Activated CD4-positive, alpha-beta T cell treated with anti-CD3 and anti-CD28 coated beads for 36 hours (primary cell): ENCODE measurements at regions of chr1 and their contacts with region 1.

Region 1: DNA sequence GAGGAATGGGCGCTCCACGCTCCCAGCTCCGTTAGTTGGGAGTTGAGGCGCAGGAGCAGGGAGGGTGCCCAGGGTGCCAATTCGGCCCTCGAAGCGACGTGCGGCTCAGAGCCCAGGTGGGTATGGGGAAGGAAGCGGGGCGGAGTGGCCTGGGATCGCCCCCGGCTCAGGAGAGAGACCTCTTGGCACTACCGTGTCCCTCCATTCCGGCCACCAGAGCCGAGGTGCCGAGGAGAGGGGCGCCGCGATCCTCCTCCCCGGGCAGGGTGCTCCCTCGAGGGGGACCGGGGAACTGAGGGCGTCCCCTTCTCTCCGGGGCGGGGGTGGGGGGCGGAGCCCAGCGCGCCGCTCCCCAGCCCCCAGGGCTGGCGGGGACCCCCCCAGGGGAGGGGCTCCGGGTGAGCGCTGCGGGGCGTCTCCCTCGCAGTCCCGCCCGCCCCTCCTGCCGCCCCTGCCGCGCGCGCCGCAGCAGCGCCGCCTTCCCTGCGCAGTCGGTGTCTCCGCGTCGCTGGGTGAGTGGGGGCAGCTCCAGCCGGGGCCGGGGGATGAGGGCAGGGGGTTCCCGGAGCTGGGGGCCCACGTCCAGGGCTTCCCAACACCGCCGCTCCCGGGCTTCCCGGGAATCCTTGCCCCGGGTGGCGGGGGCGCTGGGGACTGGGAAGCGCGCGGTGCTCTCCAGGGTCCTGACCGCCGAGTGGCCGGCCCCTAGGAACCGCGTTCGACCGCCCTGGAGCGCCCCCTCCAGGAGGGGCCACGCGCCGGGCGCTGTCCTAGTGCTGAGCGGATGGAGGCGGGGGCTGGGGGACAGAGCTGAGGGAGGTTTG is at the start of gene HPCA:
- DNase-seq: peak; percentile 76
- ATAC-seq: peak; percentile 83
- H3K4me3 Mint-ChIP-seq: no peak within 1 kb of the TSS
- H3K27ac Mint-ChIP-seq: no peak within 1 kb of the TSS
- H3K4me1 Mint-ChIP-seq: no peaks in the 10 kb centered on the region
- H3K27me3 Mint-ChIP-seq: peaks cover 48% of the 10 kb centered on the region
- total RNA-seq, gene HPCA: 0.49 TPM in 1 of 2 experiments, not detected in the other

Region 2: DNA sequence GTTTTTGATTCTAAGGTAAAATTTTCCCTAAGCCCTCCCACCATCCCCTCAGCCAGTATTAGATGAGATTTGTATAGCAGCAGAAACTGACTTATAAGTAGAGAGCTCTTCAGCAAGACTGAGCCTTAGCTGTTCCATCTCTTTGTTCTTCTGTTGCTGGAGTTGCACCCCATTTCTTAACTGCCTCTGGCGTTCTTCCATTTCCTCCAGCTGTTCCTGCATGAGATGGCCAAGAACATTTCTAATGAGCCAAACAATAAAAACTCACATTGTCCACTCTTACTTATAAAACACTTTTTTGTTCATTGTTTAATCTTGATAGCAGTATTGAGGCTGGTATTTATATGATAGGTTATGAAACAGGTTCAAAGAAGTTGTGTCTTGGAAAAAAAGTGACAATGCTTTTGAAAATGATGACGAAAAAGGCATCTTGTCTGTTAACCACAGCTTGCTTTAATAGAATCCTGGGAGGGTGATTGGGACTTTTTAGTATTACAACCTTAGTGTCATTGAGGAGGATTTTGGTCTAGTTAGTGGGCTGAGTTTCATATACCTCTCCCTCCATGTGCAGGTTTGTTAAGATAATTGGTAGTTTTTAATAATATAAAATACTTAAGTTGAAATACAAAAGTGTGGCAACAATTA is 201.9 kb before region 1 on chr1:
- CTCF ChIA-PET with region 1: no interaction called
- POLR2A ChIA-PET with region 1: no interaction called
- intact Hi-C with region 1: no loop called
- DNase-seq: no peak
- ATAC-seq: peak; percentile 34
- H3K4me3 Mint-ChIP-seq: no peak overlapping the region
- H3K27ac Mint-ChIP-seq: peak overlapping the region; percentile 82
- H3K4me1 Mint-ChIP-seq: peaks cover 13% of the 10 kb centered on the region
- H3K27me3 Mint-ChIP-seq: no peaks in the 10 kb centered on the region

Region 3: GRCh38 chr1:32899586-32900296 is 13.5 kb after region 1 on chr1:
- CTCF ChIA-PET with region 1: interaction called, 10 read pairs
- POLR2A ChIA-PET with region 1: no interaction called
- intact Hi-C with region 1: no loop called
- DNase-seq: no peak
- ATAC-seq: no peak
- H3K4me3 Mint-ChIP-seq: no peak overlapping the region
- H3K27ac Mint-ChIP-seq: no peak overlapping the region
- H3K4me1 Mint-ChIP-seq: peaks cover 6% of the 10 kb centered on the region
- H3K27me3 Mint-ChIP-seq: peaks cover 42% of the 10 kb centered on the region

Region 4: GRCh38 chr1:32925403-32926162 is 39.4 kb after region 1 on chr1:
- CTCF ChIA-PET with region 1: interaction called, 4 read pairs
- POLR2A ChIA-PET with region 1: no interaction called
- intact Hi-C with region 1: loop called in 1 of 2 experiments (anchors 5 kb)
- DNase-seq: peak; percentile 50
- ATAC-seq: peak; percentile 70
- H3K4me3 Mint-ChIP-seq: peak overlapping the region; percentile 19
- H3K27ac Mint-ChIP-seq: no peak overlapping the region
- H3K4me1 Mint-ChIP-seq: peaks cover 16% of the 10 kb centered on the region
- H3K27me3 Mint-ChIP-seq: peaks cover 51% of the 10 kb centered on the region